ENCODE measurements at regions of chr2 and their contacts with region 1.

Region 1: GRCh38 chr2:117470311-117471095 is 344.0 kb upstream of the DDX18 start:
- DNase-seq: no peak

Region 2: DNA sequence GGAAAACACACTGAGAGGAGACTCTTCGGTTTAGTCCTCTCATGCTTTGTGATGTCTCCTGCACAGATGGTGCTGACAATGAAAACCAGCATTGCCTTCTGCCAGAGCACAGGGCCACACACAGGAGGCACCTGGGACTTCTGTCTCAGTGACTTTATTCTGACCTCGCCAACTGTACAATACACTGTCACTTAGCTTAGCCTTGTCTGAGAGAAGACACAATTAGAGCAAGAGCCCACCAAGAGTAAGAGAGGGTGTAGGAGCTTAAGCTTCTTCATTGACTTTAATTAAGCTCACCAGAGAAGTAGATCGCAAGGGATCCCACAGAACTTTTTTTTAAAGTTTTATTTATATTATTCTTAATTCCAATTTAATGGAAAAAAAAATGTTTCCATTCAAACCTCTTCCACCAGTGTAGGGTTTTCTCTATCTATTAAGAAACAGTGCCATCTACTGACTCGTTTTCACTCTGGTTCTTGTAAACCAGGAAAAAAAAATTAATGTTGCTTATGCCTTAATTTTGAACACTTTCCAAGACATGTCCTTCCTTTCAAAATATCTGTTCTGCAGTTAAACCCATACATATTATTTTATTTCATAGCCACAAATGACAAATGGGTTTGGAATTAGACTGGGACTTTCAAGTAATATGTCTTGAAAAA is 301.6 kb after region 1 on chr2:
- intact Hi-C with region 1: loop called (anchors 5 kb)
- DNase-seq: no peak

Region 3: GRCh38 chr2:118443596-118443995 is 973.1 kb after region 1 on chr2:
- intact Hi-C with region 1: no loop called
- DNase-seq: no peak

Measured in cardiac septum (tissue), 1 donor.